Cardiac septum (tissue), 1 donor: ENCODE measurements at regions of chr11 and their contacts with region 1.

Region 1: GRCh38 chr11:65817835-65818742 is 15.7 kb upstream of the SNX32 start:
- DNase-seq: peak; percentile 98

Region 2: DNA sequence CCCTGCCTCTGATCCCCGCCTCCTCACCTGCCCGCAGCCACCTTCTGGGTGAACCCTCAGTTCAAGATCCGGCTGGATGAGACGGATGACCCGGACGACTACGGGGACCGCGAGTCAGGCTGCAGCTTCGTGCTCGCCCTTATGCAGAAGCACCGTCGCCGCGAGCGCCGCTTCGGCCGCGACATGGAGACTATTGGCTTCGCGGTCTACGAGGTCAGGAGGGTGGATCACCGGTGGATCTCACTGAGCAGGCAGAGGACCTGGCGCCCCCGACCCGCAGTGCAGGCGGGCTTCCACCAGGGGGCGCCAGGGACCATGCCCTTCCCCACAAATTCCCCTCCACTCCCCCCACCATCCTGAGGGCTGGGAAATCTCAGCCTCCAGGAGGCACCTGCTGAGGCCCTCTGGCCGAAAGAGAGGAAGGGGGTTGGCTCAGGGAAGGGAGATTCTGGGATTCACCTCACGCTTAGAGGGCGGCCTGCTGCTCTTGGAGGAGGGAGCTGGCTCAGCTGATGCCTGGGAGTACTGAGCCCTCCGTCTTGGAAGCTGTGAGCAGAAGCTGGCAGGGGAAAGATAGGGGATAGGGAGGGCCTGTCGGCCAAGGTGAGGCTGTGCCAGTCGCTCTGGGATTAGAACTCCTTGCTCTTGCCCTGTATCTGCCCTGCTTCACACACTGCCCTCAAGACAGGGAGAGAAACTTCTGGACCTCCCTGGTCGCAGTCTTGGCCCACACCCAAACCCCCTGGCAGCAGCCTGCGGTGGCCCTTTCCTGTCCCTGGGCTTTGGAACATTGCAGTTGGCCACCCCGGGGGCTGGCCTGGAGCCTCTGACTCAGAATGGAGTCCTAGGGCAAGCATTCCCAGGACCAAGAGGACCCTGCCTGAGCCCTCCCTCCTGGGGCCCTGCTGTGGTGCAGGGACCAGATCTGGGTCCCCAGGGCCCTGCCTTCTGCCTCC is 613.2 kb before region 1 on chr11:
- intact Hi-C with region 1: no loop called
- DNase-seq: peak; percentile 77

Region 3: GRCh38 chr11:65624931-65625627 is 193.0 kb before region 1 on chr11:
- intact Hi-C with region 1: loop called (anchors 5 kb)
- DNase-seq: no peak

Region 4: GRCh38 chr11:65711785-65712632 is 106.1 kb before region 1 on chr11 and contains the start of gene KAT5:
- intact Hi-C with region 1: loop called (anchors 2 kb)
- DNase-seq: peak; percentile 99
- total RNA-seq, gene KAT5: 49.2 TPM

Region 5: DNA sequence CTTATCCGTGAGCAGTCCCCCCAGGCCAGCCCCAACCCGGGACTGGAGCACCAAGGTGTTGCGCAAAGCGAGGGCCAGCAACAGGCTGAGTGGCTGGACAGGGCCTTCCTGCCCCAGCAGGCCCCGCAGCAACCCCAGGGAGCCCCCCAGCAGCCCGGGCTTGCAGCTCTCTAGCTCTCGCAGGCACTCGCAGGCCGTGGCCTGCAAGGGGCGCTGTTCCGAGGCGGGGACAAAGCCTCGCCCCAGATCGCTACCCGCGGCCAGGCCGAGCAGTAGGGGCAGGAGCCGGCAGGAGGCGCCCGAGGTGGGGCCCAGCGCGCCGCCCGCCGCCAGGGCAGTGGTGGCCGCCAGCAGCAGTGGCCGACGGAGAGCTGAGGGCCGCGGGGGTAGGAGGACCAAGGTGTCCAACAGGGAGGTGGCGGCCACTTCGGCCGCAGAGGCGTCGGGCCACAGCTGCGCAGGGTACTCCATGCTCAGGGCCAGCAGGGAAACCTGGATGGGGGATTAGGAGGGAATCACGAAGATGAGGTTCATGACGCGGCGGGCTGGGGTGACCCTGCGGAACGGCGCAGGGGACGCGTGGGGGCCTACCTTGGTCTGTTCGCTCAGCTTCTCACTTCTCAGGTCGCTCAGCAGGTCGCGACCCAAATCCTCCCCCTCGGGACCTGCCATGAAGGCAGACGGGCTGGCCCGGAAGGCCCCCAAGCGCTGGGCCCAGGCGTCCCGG is 38.1 kb before region 1 on chr11:
- intact Hi-C with region 1: loop called (anchors 2 kb)
- DNase-seq: peak; percentile 92